HepG2 (cell line): ENCODE measurements at regions of chr17 and their contacts with region 1.

Region 1: DNA sequence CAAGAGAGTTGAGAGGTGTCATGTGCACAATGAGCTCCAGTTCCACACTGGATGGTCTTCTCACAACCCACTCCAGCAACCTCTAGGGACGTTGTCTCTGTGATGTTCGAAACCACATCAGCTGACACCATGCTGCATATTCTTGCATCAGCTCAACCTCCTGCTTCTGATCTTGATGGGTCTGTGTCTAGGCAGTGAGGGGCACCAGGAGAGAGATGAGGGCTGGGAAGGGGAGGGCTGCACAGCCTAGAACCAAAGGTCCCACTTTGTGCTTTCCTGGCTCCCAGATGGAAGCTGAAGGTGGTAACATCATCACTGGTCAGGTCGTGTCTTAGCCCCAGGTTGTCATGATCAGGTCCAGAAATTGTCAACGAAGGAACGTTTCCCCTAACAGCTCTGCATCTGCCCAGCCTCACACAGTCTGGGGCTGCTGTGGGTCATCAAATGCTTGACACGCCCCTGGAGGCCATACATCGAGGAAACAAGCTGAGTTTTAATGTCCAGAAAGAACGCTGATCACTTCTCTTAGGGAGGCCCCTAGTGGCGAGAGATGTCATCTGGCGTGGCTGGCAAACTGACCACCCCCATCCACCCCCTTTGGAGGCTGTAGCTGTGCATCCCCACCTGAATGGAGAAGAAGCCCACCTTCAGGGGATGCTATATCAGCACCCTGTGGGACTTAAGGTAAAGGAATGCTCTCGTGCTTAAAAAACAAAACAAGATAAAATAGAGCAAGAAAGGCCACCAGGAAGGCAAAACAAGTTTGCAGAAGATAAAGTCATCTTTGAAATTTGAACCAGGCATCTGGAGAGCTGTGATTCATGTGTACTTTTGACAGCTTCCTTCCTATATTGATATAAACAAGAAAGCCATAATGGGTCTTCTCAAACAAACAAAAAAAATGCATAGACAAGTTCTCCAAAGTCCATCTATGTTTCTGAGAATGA is 58.3 kb downstream of the WIPI1 start:
- DNase-seq: peak; percentile 91
- ATAC-seq: peak; percentile 97
- H3K4me3 ChIP-seq: no peak overlapping the region
- H3K27ac ChIP-seq: peak overlapping the region; percentile 8
- H3K4me1 ChIP-seq: peaks cover 57% of the 10 kb centered on the region
- H3K27me3 ChIP-seq: no peaks in the 10 kb centered on the region
- CTCF ChIP-seq: peak; percentile 99
- EP300 ChIP-seq: peak in 1 of 2 experiments; percentile 60; a peak in 2 of 4 replicates
- POLR2A ChIP-seq: no peak
- RAD21 ChIP-seq: peak; percentile 98

Region 2: DNA sequence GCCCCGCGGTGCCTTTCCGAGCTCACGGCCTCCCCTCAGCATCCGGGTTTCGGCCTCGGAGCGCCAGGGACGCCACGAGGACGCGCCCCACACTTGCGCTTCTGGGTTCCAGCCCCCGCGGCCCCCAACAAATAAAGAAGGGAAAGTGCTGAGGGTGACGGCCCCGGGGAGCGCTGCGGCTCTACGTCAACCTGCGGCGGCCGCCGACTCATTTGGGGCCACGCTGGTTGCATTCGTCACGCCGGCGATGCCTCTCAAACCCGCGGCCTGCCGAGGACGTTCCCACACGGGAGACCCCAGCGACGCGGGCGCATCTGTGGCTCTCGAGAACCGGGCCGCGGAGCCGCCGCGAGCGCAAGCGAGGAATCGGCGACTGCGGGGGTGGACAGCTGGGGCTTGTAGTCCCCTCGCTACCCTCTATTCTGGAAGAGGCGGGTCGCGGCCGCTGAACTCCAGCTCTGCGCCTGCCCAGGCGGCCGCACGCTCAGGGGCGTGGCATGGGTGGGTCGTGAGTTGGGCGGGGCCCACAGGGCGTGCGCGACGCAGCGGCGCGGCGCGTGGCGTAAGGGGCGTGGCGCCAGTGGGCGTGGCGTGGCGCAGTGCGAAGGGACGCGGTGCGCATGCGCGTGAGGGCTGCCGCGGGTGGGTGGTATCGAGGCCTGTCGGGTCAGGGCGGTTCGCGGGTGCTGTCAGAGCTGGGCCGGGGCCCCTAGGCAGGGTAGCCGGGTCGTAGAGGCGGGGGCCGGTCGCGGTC is 151.3 kb before region 1 on chr17 and contains the start of gene AMZ2:
- CTCF ChIA-PET with region 1: no interaction called
- POLR2A ChIA-PET with region 1: interaction called, 12 read pairs
- in situ Hi-C with region 1: no loop called
- intact Hi-C with region 1: no loop called
- DNase-seq: peak; percentile 88
- ATAC-seq: peak; percentile 99
- H3K4me3 ChIP-seq: peak within 1 kb of the TSS; percentile 77 to 94 (median 80)
- H3K27ac ChIP-seq: peak within 1 kb of the TSS; percentile 77
- H3K4me1 ChIP-seq: peaks cover 27% of the 10 kb centered on the region
- H3K27me3 ChIP-seq: no peaks in the 10 kb centered on the region; a peak in 2 of 5 replicates
- CTCF ChIP-seq: peak; percentile 29
- EP300 ChIP-seq: no peak
- POLR2A ChIP-seq: peak; percentile 90 to 93
- RAD21 ChIP-seq: peak; percentile 44
- total RNA-seq, gene AMZ2: 86.9 and 99.9 TPM in 2 replicates

Region 3: GRCh38 chr17:68260051-68260762 is 138.8 kb before region 1 on chr17:
- CTCF ChIA-PET with region 1: interaction called, 32 read pairs
- POLR2A ChIA-PET with region 1: interaction called, 18 read pairs
- in situ Hi-C with region 1: no loop called
- intact Hi-C with region 1: loop called (anchors 1 kb)
- DNase-seq: no peak
- ATAC-seq: no peak
- H3K4me3 ChIP-seq: no peak overlapping the region
- H3K27ac ChIP-seq: no peak overlapping the region
- H3K4me1 ChIP-seq: peaks cover 31% of the 10 kb centered on the region
- H3K27me3 ChIP-seq: no peaks in the 10 kb centered on the region
- CTCF ChIP-seq: no peak
- EP300 ChIP-seq: no peak
- POLR2A ChIP-seq: no peak
- RAD21 ChIP-seq: no peak

Region 4: DNA sequence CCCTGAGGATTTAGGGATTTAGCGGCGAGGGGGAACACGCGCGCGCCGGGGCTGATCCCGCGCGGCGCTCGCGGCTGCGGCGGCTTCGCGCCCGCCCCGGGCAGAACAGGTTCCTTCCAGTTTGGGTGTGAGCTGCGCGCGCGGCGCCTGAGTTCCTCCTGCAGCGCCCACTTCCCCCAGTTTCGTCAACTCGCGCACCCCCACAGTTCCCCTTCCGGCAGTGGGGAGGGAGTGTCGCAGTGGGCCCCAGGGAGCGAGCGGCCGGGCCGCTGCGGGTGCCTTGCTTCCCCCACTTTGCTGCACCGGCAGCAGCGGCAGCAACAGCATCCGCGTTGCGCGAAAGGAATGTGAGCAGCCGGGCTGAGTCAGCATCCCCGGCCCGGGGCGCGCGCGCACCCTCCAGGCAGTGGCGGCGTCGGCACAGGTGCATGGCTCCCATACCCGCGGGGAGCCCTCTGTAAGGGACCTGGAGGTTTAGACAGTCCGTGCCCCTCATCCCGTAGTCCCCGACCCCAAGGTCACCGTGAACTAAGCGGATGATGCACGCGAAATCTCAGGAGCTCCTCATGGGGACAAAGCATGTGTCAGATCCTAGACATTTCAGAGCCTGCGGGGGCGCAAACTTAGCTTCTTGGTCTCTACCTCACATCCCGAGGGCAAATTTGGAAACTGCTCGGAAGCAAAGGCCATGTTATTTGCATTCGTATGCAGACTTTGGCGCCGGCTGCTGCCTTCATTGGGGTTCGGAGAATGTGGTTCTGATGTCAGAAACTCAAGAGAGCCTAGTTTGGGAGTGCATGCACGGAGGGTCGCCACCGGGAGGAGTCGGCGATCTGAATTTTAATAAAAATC is 106.9 kb before region 1 on chr17:
- CTCF ChIA-PET with region 1: interaction called, 9 read pairs
- POLR2A ChIA-PET with region 1: interaction called, 11 read pairs
- in situ Hi-C with region 1: no loop called
- intact Hi-C with region 1: loop called (anchors 1 kb)
- DNase-seq: peak; percentile 77
- ATAC-seq: peak; percentile 86
- H3K4me3 ChIP-seq: peak overlapping the region; percentile 74 to 80 (median 79)
- H3K27ac ChIP-seq: peak overlapping the region; percentile 72
- H3K4me1 ChIP-seq: peaks cover 57% of the 10 kb centered on the region
- H3K27me3 ChIP-seq: peaks cover 0 to 3% of the 10 kb centered on the region in 2 experiments; a peak in 1 of 5 replicates
- CTCF ChIP-seq: peak; percentile 49
- EP300 ChIP-seq: 0 out of 4 replicates have a peak, but pooled peaks of 1 of the 2 experiments have one; percentile 4
- POLR2A ChIP-seq: peak in 1 of 2 experiments; percentile 34; a peak in 3 of 4 replicates
- RAD21 ChIP-seq: peak; percentile 60

Region 5: DNA sequence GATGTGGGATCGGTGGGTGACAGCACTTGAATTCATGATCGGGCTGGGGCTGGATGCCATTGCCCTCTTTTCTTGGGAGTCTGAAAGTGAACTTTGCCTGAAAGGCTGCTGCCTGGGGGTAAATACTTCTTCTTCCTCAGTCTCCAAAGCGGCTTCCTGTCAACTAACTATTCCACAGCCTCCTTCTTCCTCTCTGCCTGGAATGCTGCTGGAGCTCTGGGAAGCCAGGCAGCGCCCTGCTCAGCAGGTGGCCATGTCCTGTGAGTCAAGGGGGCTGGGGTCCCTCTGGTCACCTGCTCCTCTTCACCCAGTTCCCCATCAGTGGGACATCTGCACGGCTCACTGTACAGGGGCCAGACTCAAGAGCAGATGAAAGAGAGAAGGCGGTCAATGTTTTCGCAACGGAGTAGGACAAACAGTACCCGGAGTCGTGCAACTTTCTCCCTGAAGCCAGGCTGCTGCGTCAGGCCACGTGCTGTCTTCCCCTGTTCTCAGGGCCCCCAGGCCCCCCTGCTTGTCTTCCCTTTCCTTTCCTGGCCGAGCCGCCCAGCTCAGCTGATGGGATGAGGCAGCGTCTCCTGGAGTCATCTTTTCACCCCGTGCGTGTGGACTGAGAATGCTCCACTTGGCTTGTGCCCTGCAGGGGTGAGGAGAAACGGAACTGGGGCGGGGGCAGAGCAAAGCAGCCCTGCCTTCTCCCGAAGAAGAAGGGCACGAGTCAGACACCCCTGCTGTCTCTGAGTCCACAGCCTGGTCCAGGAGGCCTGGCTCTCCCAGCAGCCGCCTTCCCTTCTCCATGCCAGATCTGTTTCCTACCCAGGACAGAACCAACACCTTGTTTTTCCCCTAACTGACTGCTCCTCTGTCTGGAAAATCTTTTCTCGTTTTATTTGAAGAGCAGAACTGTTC is 20.8 kb before region 1 on chr17:
- CTCF ChIA-PET with region 1: interaction called, 4 read pairs
- POLR2A ChIA-PET with region 1: interaction called, 41 read pairs
- in situ Hi-C with region 1: no loop called
- intact Hi-C with region 1: loop called (anchors 1 kb)
- DNase-seq: peak; percentile 95
- ATAC-seq: peak; percentile 80
- H3K4me3 ChIP-seq: peak overlapping the region; percentile 37 to 72 (median 38)
- H3K27ac ChIP-seq: peak overlapping the region; percentile 97
- H3K4me1 ChIP-seq: peaks cover 74% of the 10 kb centered on the region
- H3K27me3 ChIP-seq: no peaks in the 10 kb centered on the region
- CTCF ChIP-seq: peak; percentile 14
- EP300 ChIP-seq: peak; percentile 70 to 87; a peak in 3 of 4 replicates
- POLR2A ChIP-seq: peak; percentile 59 to 87
- RAD21 ChIP-seq: peak; percentile 15

Region 6: GRCh38 chr17:68383443-68384321 is 15.3 kb before region 1 on chr17:
- CTCF ChIA-PET with region 1: interaction called, 4 read pairs
- POLR2A ChIA-PET with region 1: interaction called, 41 read pairs
- in situ Hi-C with region 1: no loop called
- intact Hi-C with region 1: loop called (anchors 1 kb)
- DNase-seq: peak; percentile 99
- ATAC-seq: peak; percentile 74
- H3K4me3 ChIP-seq: no peak overlapping the region
- H3K27ac ChIP-seq: peak overlapping the region; percentile 97
- H3K4me1 ChIP-seq: peaks cover 100% of the 10 kb centered on the region
- H3K27me3 ChIP-seq: no peaks in the 10 kb centered on the region
- CTCF ChIP-seq: peak; percentile 18; the same call in 1 of the 2 replicates
- EP300 ChIP-seq: peak; percentile 84 to 98
- POLR2A ChIP-seq: peak in 1 of 2 experiments; percentile 63; a peak in 3 of 4 replicates
- RAD21 ChIP-seq: peak; percentile 41

Region 7: DNA sequence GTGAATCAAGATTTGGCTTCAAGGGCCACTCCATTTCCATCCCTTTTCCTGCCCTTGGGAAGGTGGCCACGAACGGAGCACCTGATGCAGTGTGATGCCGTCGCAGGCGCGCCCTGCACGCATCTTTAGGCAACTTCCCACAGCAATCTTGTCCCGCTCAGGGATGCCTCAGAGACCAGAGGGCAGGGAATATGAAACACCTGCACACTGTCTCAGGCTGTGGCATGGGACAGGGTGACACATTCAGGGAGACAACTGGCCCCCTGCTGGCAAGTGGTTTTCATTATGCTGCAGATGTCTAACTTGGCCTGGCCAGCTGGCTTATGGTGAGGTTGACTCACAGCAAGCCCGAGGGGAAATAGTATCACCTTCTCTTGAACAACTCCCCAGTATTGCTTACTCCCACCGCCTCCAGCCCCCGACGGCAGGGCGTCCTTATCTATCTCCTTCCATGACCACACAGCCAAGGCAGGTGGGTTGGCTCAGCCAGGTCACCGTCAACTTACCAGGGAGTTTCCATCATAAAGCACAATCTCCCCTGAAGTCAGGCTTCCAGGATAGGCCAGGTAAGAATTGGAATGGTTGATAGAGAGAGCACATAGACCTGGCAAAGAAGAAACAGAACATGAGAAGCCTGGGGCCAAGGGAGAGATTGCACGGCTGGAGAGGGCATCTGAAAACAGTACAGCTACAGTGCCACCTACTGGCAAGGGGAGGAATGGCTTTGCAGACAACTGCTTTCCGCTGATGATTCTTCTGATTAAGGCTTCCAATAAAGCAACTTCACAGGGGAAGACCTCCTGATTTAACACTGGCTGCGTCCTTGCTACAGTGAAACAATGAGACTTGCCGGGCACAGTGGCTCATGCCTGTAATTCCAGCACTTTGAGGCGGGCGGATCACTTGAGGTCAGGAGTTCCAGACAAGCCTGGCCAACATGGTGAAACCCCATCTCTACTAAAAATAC is 37.2 kb after region 1 on chr17:
- CTCF ChIA-PET with region 1: interaction called, 6 read pairs
- POLR2A ChIA-PET with region 1: interaction called, 4 read pairs
- in situ Hi-C with region 1: no loop called
- intact Hi-C with region 1: loop called (anchors 1 kb)
- DNase-seq: peak; percentile 79
- ATAC-seq: peak; percentile 81
- H3K4me3 ChIP-seq: no peak overlapping the region
- H3K27ac ChIP-seq: no peak overlapping the region
- H3K4me1 ChIP-seq: peaks cover 41% of the 10 kb centered on the region
- H3K27me3 ChIP-seq: no peaks in the 10 kb centered on the region
- CTCF ChIP-seq: peak; percentile 95
- EP300 ChIP-seq: no peak
- POLR2A ChIP-seq: no peak
- RAD21 ChIP-seq: peak; percentile 75

Region 8: GRCh38 chr17:68527323-68527722 is 128.4 kb after region 1 on chr17:
- CTCF ChIA-PET with region 1: no interaction called
- POLR2A ChIA-PET with region 1: no interaction called
- in situ Hi-C with region 1: no loop called
- intact Hi-C with region 1: no loop called
- DNase-seq: no peak
- ATAC-seq: no peak
- H3K4me3 ChIP-seq: no peak overlapping the region
- H3K27ac ChIP-seq: no peak overlapping the region
- H3K4me1 ChIP-seq: no peaks in the 10 kb centered on the region
- H3K27me3 ChIP-seq: no peaks in the 10 kb centered on the region
- CTCF ChIP-seq: no peak
- EP300 ChIP-seq: no peak
- POLR2A ChIP-seq: no peak
- RAD21 ChIP-seq: no peak